ENCODE measurements at regions of chr1 and their contacts with region 1.

Region 1: GRCh38 chr1:63442141-63442475 is 74.7 kb downstream of the ALG6 start:
- ATAC-seq: no peak
- H3K4me3 ChIP-seq: no peak overlapping the region
- H3K27ac ChIP-seq: no peak overlapping the region
- H3K4me1 ChIP-seq: no peaks in the 10 kb centered on the region

Region 2: DNA sequence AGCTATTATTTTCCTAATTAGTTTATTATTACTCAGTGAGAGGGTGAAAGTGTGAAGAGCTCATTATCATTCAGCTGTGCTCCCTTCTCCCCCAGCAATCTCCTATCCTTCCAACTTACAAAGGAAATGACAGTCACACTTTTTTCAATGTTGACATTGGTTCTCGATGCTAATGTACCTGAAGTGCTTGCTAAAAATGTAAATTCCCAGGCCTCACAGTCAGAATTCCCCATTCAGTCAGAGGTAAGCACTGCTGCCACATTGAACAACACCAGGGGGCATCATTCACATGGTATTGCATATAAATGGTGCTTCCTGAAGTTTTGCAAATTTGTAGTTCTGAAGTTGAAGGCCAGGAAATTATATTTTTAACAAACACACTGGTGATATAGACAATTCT is 252.4 kb before region 1 on chr1:
- in situ Hi-C with region 1: loop called in 1 of 9 experiments (anchors 25 kb)
- ATAC-seq: no peak
- H3K4me3 ChIP-seq: no peak overlapping the region
- H3K27ac ChIP-seq: no peak overlapping the region
- H3K4me1 ChIP-seq: no peaks in the 10 kb centered on the region

Region 3: GRCh38 chr1:63917571-63918417 is 475.7 kb after region 1 on chr1:
- in situ Hi-C with region 1: no loop called
- ATAC-seq: peak in 1 of 8 experiments; percentile 30
- H3K4me3 ChIP-seq: no peak overlapping the region
- H3K27ac ChIP-seq: no peak overlapping the region
- H3K4me1 ChIP-seq: peaks cover 8 to 16% of the 10 kb centered on the region in 2 donors